AG04450 (cell line): ENCODE measurements at regions of chr17 and their contacts with region 1.

Region 1: GRCh38 chr17:35612924-35613521 is 25.9 kb downstream of the AP2B1 start:
- DNase-seq: no peak
- H3K4me3 ChIP-seq: no peak overlapping the region
- H3K27ac ChIP-seq: no peak overlapping the region
- H3K27me3 ChIP-seq: no peaks in the 10 kb centered on the region
- CTCF ChIP-seq: peak; percentile 71

Region 2: GRCh38 chr17:35094902-35095301 is 518.1 kb before region 1 on chr17:
- CTCF ChIA-PET with region 1: no interaction called
- POLR2A ChIA-PET with region 1: no interaction called
- DNase-seq: peak; percentile 60
- H3K4me3 ChIP-seq: no peak overlapping the region
- H3K27ac ChIP-seq: peak overlapping the region; percentile 47
- H3K27me3 ChIP-seq: no peaks in the 10 kb centered on the region
- CTCF ChIP-seq: no peak

Region 3: DNA sequence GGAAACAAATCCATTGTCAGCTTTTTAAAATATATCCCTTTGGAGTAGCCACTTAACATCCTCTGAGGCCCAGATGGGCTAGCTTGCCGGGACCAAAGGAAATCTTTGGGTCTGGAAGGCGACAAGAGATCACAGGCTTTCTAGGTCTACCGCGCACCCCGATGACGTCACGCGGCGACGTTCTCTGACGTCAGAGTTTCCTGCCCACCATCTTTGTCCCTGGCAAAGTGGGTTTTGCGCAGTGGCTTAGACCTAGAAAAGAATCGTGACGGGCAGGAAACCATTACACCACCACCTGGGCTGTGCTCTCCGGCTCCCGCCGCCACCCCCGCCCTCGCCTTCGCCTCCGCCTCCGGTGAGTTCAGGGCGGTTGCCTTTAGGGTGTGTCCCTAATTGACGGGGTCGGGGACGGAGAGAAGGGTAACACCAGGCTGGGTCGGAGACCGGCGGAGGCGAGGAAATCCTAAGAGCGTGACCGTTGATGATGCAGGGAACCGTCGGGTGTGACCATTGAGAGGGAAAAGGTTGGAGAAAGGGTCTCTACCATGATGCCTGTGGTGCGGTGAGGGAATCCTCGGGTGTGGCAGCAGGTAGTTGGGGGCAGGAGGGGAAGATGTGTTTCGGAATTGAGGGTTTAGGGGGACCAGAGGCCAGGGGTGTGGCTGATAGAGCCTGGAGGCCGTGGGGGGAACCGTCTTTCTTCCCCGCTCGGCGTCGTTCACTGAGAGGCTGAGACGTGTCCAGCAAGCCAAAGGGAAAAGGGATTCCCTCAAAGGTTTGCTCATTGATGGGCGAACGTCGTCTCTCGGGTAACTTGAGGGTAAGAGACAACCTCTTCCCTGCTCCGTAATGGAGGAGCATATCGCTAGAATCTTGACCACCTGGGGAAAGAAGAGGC is 25.7 kb before region 1 on chr17 and contains the start of gene AP2B1:
- CTCF ChIA-PET with region 1: interaction called, 10 read pairs
- POLR2A ChIA-PET with region 1: interaction called, 9 read pairs
- DNase-seq: peak; percentile 92
- H3K4me3 ChIP-seq: peak within 1 kb of the TSS; percentile 99
- H3K27ac ChIP-seq: peak within 1 kb of the TSS; percentile 97
- H3K27me3 ChIP-seq: peaks cover 2% of the 10 kb centered on the region
- CTCF ChIP-seq: no peak
- polyA plus RNA-seq, gene AP2B1: 234 and 258 TPM in 2 replicates

Region 4: GRCh38 chr17:35596530-35597233 is 16.3 kb before region 1 on chr17:
- CTCF ChIA-PET with region 1: interaction called, 34 read pairs
- POLR2A ChIA-PET with region 1: no interaction called
- DNase-seq: no peak
- H3K4me3 ChIP-seq: no peak overlapping the region
- H3K27ac ChIP-seq: no peak overlapping the region
- H3K27me3 ChIP-seq: no peaks in the 10 kb centered on the region
- CTCF ChIP-seq: no peak

Region 5: DNA sequence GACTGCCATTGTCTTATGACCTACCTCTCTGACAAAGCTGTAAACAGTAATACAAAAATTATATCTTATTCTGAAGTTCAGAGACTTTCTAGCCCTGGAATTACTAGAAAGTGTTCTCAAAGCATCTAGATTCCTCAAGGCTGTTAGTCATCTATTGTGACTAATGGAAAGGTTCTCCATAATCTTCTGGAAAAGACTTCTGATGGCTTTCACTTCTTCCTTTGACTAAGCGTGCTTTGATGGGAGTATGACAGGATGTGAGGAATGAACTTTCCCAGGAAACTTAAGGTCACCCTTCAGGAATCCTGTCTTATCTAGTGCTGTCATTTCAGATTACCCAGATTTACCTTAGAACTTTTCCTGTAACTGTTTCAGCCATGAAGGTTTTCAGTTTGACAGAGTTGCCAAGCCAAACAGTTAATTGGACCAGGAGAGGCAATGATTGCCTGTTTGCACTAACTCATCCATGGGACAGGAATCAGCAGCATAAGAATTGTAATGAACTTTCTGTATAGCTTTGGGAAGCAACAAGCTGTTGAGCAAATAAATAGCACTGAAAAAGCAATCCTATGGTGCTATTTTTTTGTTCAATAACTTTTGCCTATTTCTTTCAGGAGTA is 17.6 kb after region 1 on chr17:
- CTCF ChIA-PET with region 1: interaction called, 21 read pairs
- POLR2A ChIA-PET with region 1: interaction called, 3 read pairs
- DNase-seq: no peak
- H3K4me3 ChIP-seq: no peak overlapping the region
- H3K27ac ChIP-seq: no peak overlapping the region
- H3K27me3 ChIP-seq: no peaks in the 10 kb centered on the region
- CTCF ChIP-seq: no peak

Region 6: GRCh38 chr17:35726127-35726952 is 113.3 kb after region 1 on chr17:
- CTCF ChIA-PET with region 1: interaction called, 15 read pairs
- POLR2A ChIA-PET with region 1: no interaction called
- DNase-seq: peak; percentile 72
- H3K4me3 ChIP-seq: no peak overlapping the region
- H3K27ac ChIP-seq: peak overlapping the region; percentile 70
- H3K27me3 ChIP-seq: no peaks in the 10 kb centered on the region
- CTCF ChIP-seq: no peak

Region 7: DNA sequence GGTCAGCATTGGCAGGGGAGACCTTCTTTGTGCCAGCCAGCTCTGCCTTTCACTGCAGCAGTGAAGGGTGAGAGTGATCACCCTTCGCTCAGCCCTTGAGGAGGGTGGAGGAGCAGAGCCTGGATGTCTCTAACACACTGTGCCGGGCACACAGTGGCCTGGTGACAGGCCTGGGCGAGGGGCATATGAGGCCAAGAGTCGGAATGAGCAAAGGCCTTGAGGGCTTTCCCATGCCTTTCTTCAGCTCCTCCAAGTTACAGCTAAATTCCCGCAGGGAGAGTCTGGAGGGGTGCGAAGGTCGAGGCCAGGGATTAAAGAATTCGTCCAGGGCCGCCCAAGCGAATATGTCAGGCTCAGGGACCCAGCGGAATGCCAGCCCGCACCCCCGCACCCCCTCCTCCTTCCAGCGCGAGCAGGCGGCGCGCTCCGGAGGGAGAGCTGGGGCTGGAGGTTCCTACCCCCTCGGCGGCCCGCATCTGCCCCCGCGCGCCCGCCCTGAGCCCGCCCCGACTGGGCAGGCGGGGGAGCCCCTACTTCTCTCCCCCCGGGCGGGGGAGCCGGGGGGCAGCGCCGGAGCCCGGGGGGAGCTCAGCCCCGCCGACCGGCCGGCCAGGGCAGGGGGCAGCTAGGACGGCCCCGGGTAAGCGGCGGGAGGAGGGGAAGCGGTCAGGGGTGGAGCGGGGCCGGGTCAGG is 118.4 kb after region 1 on chr17 and contains the start of gene RASL10B:
- CTCF ChIA-PET with region 1: interaction called, 15 read pairs
- POLR2A ChIA-PET with region 1: no interaction called
- DNase-seq: no peak
- H3K4me3 ChIP-seq: peak within 1 kb of the TSS; percentile 70
- H3K27ac ChIP-seq: no peak within 1 kb of the TSS
- H3K27me3 ChIP-seq: no peaks in the 10 kb centered on the region
- CTCF ChIP-seq: no peak
- polyA plus RNA-seq, gene RASL10B: 3.3 and 4.3 TPM in 2 replicates